GM10248 (cell line): ENCODE measurements at regions of chr3 and their contacts with region 1.

Region 1: DNA sequence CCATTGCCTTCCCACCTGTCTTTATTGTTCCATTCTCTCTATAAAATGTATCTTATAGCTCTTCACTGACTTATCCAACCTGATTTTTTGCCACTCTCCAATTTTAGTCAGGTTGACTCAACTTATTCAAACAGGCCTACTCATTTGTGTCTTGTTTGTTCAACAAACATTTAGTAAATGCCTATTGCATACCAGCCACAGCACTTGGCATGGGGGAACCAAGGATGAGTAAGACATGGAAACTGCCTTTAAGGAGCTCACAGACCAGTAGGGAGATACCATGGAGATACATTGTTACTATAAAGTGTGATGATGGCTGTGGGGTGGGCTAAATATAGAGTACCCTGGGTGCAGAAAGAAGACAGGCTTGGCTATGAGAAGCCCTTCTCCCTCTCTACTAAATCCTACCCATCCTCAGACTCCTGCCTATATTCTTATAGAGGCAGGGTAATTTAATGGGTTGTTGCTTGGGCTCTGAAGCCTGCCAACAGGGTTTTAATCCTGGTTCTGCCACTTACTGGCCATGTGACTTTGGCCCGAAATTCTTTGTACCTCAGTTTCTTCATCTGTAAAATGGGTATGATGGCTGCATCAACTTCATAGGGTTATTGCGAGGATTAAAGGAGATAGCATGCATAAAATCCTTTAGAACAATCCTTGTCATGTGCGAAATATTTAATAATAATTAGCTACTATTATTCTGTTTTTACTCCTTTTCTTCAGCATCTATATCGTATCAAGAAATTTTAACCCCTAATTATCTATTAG is 348.5 kb upstream of the UMPS start:
- DNase-seq: no peak
- CTCF ChIP-seq: no peak

Region 2: GRCh38 chr3:124322309-124322880 is 59.4 kb before region 1 on chr3:
- CTCF ChIA-PET with region 1: no interaction called
- POLR2A ChIA-PET with region 1: no interaction called
- DNase-seq: no peak
- CTCF ChIP-seq: no peak

Region 3: DNA sequence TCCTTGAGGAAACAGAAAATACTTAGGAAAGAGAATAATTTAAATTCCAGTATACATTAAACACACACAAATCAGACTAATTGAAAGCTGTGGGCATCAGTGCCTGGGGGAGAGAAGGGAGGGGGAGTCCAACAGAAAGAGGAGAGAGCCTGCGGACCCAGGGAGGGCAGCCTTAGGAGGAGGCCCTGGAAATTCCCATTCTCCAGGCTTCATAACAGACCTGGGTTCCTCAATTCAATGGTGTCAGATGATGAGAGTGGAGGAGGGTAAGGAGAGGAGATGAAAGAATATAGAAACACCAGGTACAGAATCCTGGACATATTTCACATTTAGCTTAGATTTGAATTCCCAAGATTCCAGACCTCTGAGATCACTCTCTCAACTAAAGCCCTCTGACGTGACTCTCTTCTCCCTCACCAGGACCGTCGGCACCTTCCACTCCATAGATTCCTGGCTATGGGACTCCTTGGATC is 28.1 kb after region 1 on chr3:
- CTCF ChIA-PET with region 1: no interaction called
- POLR2A ChIA-PET with region 1: interaction called, 10 read pairs
- DNase-seq: no peak
- CTCF ChIP-seq: no peak

Region 4: DNA sequence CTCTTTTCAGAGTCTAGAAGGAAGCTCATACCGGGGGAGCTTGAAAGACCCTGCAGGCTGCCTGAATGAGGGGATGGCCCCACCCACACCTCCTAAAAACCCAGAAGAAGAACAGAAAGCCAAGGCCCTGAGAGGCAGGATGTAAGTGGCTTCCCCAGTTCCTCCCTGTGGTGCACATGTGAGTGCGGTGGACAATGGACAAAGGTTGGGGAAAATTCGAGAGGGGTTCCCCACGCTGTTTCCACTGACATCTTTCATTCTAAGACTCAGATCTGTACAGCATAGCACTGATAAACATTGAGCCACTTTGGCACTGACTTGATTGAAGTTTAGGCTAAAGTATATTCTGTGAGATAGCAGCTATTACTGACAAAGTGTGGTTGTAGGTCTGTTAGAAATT is 269.0 kb after region 1 on chr3:
- CTCF ChIA-PET with region 1: no interaction called
- POLR2A ChIA-PET with region 1: no interaction called
- DNase-seq: peak; percentile 57
- CTCF ChIP-seq: no peak